Calu3 (cell line): ENCODE measurements at regions of chr7 and their contacts with region 1.

Region 1: DNA sequence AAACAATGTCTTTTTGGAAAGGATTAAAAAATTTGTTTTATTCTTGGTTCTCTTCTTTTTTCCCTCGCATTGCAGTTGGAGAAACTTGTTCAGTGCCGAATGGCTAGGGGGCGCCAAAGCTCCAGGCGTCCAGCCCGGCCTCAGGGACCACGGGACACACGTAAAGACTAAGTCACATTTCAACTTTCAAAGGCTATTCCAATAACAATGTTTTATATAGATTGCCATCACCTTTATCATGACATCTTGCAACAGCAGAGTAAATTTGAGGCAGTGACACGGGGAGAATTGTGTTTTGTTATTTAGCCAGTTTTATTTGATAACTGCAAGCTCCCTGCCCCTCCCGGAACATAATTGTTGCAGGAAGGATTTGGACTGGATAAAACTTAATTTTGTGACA is 2.2 kb upstream of the IGFBP3 start:
- DNase-seq: peak; percentile 95
- H3K4me3 Mint-ChIP-seq: peak overlapping the region; percentile 99
- H3K27ac Mint-ChIP-seq: peak overlapping the region; percentile 73
- H3K4me1 Mint-ChIP-seq: peaks cover 40% of the 10 kb centered on the region
- H3K27me3 Mint-ChIP-seq: no peaks in the 10 kb centered on the region
- CTCF ChIP-seq: peak; percentile 95

Region 2: GRCh38 chr7:45459476-45459875 is 463.8 kb before region 1 on chr7:
- CTCF ChIA-PET with region 1: no interaction called
- intact Hi-C with region 1: no loop called
- DNase-seq: no peak
- H3K4me3 Mint-ChIP-seq: no peak overlapping the region
- H3K27ac Mint-ChIP-seq: no peak overlapping the region
- H3K4me1 Mint-ChIP-seq: no peaks in the 10 kb centered on the region
- H3K27me3 Mint-ChIP-seq: peaks cover 93% of the 10 kb centered on the region
- CTCF ChIP-seq: no peak

Region 3: GRCh38 chr7:45890902-45891461 is 32.3 kb before region 1 on chr7:
- CTCF ChIA-PET with region 1: interaction called, 8 read pairs
- intact Hi-C with region 1: loop called (anchors 1 kb)
- DNase-seq: peak; percentile 36
- H3K4me3 Mint-ChIP-seq: no peak overlapping the region
- H3K27ac Mint-ChIP-seq: no peak overlapping the region
- H3K4me1 Mint-ChIP-seq: peaks cover 24% of the 10 kb centered on the region
- H3K27me3 Mint-ChIP-seq: no peaks in the 10 kb centered on the region
- CTCF ChIP-seq: no peak

Region 4: DNA sequence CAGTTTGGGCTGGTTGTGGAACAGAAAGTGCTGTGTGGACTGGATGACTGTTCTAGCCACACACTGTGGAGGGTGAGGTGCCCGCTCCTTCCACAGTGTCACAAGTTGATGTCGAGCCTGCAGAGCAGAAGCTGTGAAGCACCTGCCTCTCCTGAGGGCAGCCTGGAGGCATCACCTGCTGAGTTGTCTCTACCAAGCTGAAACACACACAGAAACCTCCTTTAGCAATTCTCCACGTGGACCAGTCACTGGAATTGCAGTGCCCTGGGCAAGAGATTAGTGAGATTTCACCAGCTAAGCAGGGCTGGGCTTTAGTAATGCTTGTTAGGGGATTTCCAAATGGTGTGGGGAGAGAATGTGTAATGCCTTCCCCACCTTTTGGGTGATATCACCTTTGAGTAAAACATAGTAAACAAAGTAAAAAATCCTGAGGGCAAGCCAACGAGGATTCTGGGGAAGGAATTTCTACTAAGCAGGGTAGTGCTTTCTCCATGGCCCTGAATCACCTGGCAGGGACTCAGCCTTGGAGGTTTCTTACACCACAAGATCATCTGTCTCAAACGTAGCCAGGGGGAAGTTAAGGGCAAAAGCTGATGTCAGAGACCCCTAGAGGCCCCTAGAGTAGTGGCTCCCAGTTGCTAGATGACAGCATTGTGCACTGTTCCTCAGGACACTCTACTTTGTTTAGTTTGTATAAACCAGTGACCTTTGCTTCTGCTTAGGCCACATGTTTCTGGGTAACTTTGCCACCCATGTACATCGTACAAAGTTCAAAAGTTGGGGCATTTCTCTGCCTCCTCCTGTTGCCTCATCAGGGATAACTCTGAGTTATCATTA is 230.9 kb after region 1 on chr7:
- CTCF ChIA-PET with region 1: interaction called, 6 read pairs
- intact Hi-C with region 1: loop called (anchors 5 kb)
- DNase-seq: peak; percentile 51
- H3K4me3 Mint-ChIP-seq: no peak overlapping the region
- H3K27ac Mint-ChIP-seq: peak overlapping the region; percentile 65
- H3K4me1 Mint-ChIP-seq: peaks cover 28% of the 10 kb centered on the region
- H3K27me3 Mint-ChIP-seq: no peaks in the 10 kb centered on the region
- CTCF ChIP-seq: no peak

Region 5: GRCh38 chr7:46352004-46352954 is 429.0 kb after region 1 on chr7:
- CTCF ChIA-PET with region 1: interaction called, 16 read pairs
- intact Hi-C with region 1: loop called (anchors 1 kb)
- DNase-seq: peak; percentile 78
- H3K4me3 Mint-ChIP-seq: no peak overlapping the region
- H3K27ac Mint-ChIP-seq: peak overlapping the region; percentile 18
- H3K4me1 Mint-ChIP-seq: peaks cover 14% of the 10 kb centered on the region
- H3K27me3 Mint-ChIP-seq: no peaks in the 10 kb centered on the region
- CTCF ChIP-seq: peak; percentile 94

Region 6: DNA sequence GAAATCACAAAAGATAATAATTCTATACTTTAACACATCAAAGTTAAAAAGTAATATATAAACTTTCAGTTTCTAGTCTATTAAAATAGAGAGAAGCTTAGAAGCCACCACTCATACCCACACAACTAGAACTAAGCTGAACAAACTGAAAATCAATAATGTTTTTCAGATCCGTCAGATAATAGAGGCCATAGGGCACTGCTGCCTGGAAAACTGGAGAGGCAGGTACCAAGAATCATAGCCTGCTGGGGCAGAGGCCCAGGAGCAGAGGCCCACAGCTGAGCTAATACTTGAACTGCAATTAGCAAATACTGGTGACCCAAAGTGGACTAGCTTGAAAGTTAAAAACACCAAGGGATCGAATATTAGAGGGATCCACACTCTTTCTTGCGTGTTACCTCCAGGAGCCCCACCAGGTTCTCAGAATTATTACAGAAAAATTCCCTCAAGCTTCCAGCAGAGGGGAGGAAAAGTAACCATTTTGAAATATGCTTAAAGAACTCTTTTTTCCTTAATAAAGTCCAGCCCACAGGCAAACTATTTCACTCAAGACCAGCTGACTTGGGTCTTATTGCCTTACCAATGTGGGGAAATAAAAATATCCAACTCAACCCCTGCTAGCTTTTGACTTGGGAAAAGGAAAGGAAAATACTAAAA is 771.9 kb after region 1 on chr7:
- CTCF ChIA-PET with region 1: interaction called, 3 read pairs
- intact Hi-C with region 1: loop called (anchors 1 kb)
- DNase-seq: peak; percentile 86
- H3K4me3 Mint-ChIP-seq: no peak overlapping the region
- H3K27ac Mint-ChIP-seq: peak overlapping the region; percentile 91
- H3K4me1 Mint-ChIP-seq: peaks cover 47% of the 10 kb centered on the region
- H3K27me3 Mint-ChIP-seq: no peaks in the 10 kb centered on the region
- CTCF ChIP-seq: peak; percentile 16

Region 7: DNA sequence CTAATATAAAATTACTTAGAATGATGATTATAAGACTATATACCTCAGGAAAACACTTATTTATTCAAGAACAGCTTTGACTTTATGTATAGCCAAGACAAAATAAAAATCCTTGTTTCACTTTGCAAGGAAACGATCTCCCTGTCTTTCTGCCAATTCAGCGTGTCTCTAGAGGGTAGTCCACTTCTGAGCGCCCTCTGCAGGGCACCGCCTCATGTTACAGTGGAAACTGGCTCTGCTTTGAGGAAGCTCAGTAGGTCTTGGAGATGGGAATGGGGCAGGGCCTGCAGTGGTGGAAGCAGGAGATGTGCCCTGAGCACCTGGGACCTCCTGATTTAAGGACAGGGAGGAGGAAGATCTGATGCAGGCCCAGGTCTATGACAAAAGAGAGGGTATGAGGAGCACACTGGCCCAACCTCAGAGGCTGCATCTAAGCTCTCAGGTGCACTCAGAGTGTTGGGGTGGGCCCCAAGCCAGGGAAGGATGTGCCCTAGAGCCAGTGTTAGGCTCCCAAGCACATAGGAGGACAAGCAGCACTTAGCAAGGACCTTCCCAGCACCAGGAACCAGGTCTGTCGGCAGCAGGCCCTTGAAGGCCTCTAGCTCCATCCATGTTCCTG is 1177.6 kb after region 1 on chr7:
- CTCF ChIA-PET with region 1: interaction called, 10 read pairs
- intact Hi-C with region 1: loop called (anchors 5 kb)
- DNase-seq: peak; percentile 89
- H3K4me3 Mint-ChIP-seq: no peak overlapping the region
- H3K27ac Mint-ChIP-seq: no peak overlapping the region
- H3K4me1 Mint-ChIP-seq: peaks cover 8% of the 10 kb centered on the region
- H3K27me3 Mint-ChIP-seq: no peaks in the 10 kb centered on the region
- CTCF ChIP-seq: peak; percentile 74